Heart right ventricle (tissue), 16 donors: ENCODE measurements at regions of chr3 and their contacts with region 1.

Region 1: DNA sequence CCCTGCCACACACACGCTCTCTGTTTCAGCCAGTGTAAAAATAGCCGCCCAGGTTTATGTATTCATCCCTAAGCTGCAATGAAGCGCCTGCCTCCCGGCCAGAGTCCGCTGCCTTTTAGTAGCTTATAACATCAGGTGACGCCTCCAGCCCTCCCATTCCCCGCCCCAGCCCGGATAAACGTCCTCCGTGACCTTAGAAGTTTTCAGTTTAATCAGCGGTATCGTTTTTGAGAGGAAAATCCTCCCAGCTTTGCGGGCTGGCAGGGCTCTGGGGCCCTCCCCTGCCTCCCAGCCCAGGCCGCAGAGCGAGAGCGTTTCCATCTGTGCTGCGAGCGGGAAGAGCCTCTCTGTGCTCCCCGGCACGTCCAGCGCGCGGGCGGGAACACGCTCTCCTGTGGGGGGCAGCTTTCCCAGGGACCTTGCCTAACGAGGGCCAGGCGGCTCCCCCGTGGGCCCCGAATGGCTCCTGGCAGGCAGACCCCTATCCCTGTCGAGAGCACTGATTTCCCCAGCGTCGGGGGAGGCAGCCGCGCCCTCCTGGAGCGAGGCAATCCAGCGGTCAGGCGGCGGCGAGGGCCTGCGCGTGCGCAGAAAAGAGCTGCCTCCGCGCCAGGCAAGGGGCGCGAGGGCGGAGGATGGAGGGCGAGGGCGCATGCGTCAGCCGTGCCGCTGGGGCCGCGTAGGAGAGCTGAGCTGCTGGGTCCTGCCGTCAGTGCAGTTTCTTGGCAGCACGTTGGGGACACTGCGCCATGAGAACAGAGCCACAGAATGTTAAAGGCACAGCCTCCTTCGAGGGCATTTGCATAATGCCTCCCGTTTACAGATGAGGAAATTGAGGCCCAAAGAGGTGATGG is 71.1 kb downstream of the CCNL1 start:
- DNase-seq: peak; percentile 96 to 98
- ATAC-seq: peak; percentile 81 to 93 (median 90)
- H3K4me3 ChIP-seq: peak overlapping the region; percentile 47 to 71 (median 62)
- H3K27ac ChIP-seq: peak overlapping the region; percentile 96 to 100 (median 99)
- H3K4me1 ChIP-seq: peaks cover 3 to 80% (median 58%) of the 10 kb centered on the region in 9 donors
- H3K27me3 ChIP-seq: no peaks in the 10 kb centered on the region
- CTCF ChIP-seq: peak in 5 of 9 donors; percentile 11 to 44 (median 29)

Region 2: DNA sequence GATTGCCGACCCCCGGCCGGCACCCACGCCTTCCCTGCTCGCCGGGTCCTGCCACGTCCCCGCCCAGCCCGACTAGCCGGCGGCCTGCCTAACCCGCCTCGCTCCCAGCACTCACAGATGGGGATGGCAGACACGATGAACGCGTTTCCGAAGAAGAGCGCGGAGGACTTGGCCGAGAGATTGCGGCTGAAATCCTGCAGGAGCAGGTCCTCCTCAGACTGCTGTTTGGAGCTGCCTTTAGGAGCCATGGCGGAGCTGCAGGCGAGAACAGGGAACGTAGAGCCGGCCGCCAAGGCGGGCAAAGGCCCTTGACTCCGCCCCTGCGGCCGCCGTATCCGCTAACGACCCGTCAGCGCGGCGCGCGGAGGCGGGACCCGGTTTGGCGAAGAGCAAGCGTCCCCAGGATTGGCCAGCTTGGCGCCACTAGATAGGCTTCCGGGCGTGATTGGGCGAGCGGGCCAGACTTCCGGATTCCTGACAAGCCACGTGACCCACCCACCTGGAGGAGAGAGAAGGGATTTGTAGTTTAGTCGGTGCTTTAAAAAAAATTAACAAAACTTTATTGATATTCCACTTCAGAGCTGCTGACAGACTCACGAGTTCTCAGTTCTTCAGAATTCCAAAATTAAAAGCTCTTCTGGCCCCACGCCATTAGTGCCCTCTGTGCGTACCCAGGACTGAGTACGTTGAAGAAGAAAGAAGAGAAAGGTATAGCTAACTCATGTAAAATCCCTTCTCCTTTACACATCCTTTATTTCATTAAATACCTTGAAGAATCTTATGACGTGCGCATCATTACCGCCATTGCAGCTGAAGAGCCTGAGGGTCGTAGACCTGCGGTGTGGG is 533.8 kb before region 1 on chr3 and contains the start of gene SSR3:
- intact Hi-C with region 1: loop called in 2 of 10 experiments (anchors 5 kb)
- DNase-seq: peak; percentile 99
- ATAC-seq: peak; percentile 99 to 100 (median 100)
- H3K4me3 ChIP-seq: peak within 1 kb of the TSS; percentile 63 to 96 (median 80)
- H3K27ac ChIP-seq: peak within 1 kb of the TSS; percentile 76 to 97 (median 92)
- H3K4me1 ChIP-seq: peaks cover 0 to 64% (median 45%) of the 10 kb centered on the region in 9 donors
- H3K27me3 ChIP-seq: no peaks in the 10 kb centered on the region
- CTCF ChIP-seq: peak in 5 of 9 donors; percentile 11 to 41 (median 25)
- total RNA-seq, gene SSR3: 172 to 256 (median 216) TPM

Region 3: GRCh38 chr3:156816800-156817645 is 271.8 kb before region 1 on chr3:
- intact Hi-C with region 1: loop called in 3 of 10 experiments (anchors 1 to 10 kb)
- DNase-seq: peak; percentile 74 to 88
- ATAC-seq: peak; percentile 90 to 96 (median 93)
- H3K4me3 ChIP-seq: peak overlapping the region; percentile 54 to 73 (median 64)
- H3K27ac ChIP-seq: peak overlapping the region; percentile 79 to 94 (median 82)
- H3K4me1 ChIP-seq: peaks cover 0 to 28% (median 17%) of the 10 kb centered on the region in 9 donors
- H3K27me3 ChIP-seq: no peaks in the 10 kb centered on the region
- CTCF ChIP-seq: peak in 3 of 9 donors; percentile 12 to 41 (median 26)

Region 4: DNA sequence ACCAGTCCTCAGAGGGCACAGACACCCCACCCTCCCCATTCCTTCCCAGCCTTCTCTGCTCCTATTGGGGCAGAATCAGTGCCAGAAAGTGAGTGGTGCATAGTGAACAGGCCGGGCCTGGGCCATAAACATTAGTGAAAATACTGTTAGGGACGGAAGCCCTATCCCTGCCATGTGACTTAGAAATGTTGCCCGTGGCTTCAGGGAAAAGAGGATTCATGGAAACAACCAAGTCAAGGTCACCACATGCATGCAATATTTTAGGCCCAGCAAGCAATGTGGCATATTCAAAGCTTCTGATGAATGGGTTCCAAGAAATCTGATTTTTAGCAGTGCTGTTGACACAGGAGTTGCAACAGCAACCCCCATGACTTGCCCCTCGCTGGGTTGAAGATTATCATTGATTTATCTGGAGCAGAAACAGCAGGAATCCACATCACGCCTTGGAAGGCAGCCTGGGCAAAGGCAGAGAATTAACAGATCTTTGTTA is 18.9 kb after region 1 on chr3:
- intact Hi-C with region 1: loop called in 1 of 10 experiments (anchors 2 kb)
- DNase-seq: no peak
- ATAC-seq: no peak
- H3K4me3 ChIP-seq: no peak overlapping the region
- H3K27ac ChIP-seq: peak overlapping the region in 9 of 10 donors; percentile 29 to 83 (median 49)
- H3K4me1 ChIP-seq: peaks cover 0 to 65% (median 22%) of the 10 kb centered on the region in 9 donors
- H3K27me3 ChIP-seq: no peaks in the 10 kb centered on the region
- CTCF ChIP-seq: no peak

Region 5: GRCh38 chr3:157136647-157137387 is 48.0 kb after region 1 on chr3:
- intact Hi-C with region 1: loop called in 4 of 10 experiments (anchors 2 to 5 kb)
- DNase-seq: peak in 1 of 2 donors; percentile 20
- ATAC-seq: peak; percentile 18 to 49 (median 32)
- H3K4me3 ChIP-seq: peak overlapping the region in 1 of 10 donors; percentile 41
- H3K27ac ChIP-seq: peak overlapping the region; percentile 15 to 77 (median 58)
- H3K4me1 ChIP-seq: peaks cover 0 to 60% (median 39%) of the 10 kb centered on the region in 9 donors
- H3K27me3 ChIP-seq: no peaks in the 10 kb centered on the region
- CTCF ChIP-seq: no peak